ENCODE measurements at regions of chr1 and their contacts with region 1.

Region 1: GRCh38 chr1:116667575-116668105 is at the start of gene IGSF3:
- DNase-seq: no peak
- ATAC-seq: peak; percentile 84
- H3K4me3 ChIP-seq: peak within 1 kb of the TSS; percentile 67
- H3K27ac ChIP-seq: no peak within 1 kb of the TSS
- H3K4me1 ChIP-seq: no peaks in the 10 kb centered on the region
- H3K27me3 ChIP-seq: peaks cover 0 to 12% of the 10 kb centered on the region in 2 experiments; a peak in 2 of 4 replicates
- CTCF ChIP-seq: no peak
- EP300 ChIP-seq: no peak
- POLR2A ChIP-seq: 0 out of 2 replicates have a peak, but pooled peaks have one; percentile 27
- RAD21 ChIP-seq: no peak
- polyA plus RNA-seq, gene IGSF3: 1.4 to 2.3 TPM

Region 2: GRCh38 chr1:115933625-115934024 is 734.0 kb before region 1 on chr1:
- CTCF ChIA-PET with region 1: no interaction called
- POLR2A ChIA-PET with region 1: no interaction called
- RAD21 ChIA-PET with region 1: no interaction called
- SMC1A ChIA-PET with region 1: no interaction called
- in situ Hi-C with region 1: no loop called
- intact Hi-C with region 1: no loop called
- DNase-seq: no peak
- ATAC-seq: no peak
- H3K4me3 ChIP-seq: no peak overlapping the region
- H3K27ac ChIP-seq: no peak overlapping the region
- H3K4me1 ChIP-seq: no peaks in the 10 kb centered on the region
- H3K27me3 ChIP-seq: no peaks in the 10 kb centered on the region
- CTCF ChIP-seq: no peak
- EP300 ChIP-seq: no peak
- POLR2A ChIP-seq: no peak
- RAD21 ChIP-seq: no peak

Region 3: DNA sequence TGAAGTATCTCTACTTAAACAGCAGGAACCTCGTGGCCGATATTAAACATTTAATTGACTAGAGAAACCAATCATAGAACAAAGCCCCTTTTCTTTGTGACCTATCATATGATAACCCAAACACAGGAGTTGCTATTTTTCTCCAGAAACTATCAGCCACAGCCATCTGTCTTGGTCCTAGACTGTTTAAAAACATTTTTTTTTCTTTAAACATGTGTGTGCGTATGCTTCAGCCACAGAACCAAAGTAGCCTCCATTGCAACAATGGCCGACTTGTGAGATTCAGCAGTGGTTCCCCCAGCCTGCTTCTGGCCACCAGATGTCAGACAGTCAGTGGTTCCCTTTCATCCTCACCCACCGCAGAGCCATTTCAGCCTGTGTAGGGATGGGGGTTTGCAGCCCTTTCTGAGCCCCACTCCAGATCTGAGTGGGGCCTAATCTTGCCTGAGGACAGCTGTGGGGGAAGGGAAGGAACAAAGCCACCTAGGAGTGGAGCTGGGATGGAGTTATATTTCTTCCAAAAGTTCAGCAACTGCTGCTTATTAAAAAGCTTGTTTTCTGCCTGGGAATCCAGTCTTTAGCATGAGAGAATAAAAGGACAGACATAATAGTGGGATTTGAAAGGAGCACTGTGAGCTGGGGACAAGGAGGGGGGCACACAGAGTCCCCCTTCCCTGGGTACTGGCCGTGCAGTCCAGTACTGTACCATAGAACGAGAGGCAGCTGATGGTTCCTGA is 11.6 kb after region 1 on chr1:
- CTCF ChIA-PET with region 1: interaction called, 54 read pairs
- POLR2A ChIA-PET with region 1: interaction called, 3 read pairs
- RAD21 ChIA-PET with region 1: interaction called, 3 read pairs
- SMC1A ChIA-PET with region 1: interaction called, 3 read pairs
- in situ Hi-C with region 1: no loop called
- intact Hi-C with region 1: no loop called
- DNase-seq: no peak
- ATAC-seq: no peak; the same call in 2 of the 3 replicates
- H3K4me3 ChIP-seq: no peak overlapping the region
- H3K27ac ChIP-seq: no peak overlapping the region
- H3K4me1 ChIP-seq: no peaks in the 10 kb centered on the region
- H3K27me3 ChIP-seq: no peaks in the 10 kb centered on the region
- CTCF ChIP-seq: 0 out of 6 replicates have a peak, but pooled peaks of 1 of the 3 experiments have one; percentile 12
- EP300 ChIP-seq: no peak
- POLR2A ChIP-seq: no peak
- RAD21 ChIP-seq: no peak

Measured in GM12878 (cell line).